Dendritic cell treated with granulocyte-macrophage colony-stimulating factor and Interleukin-4, amounts not matched to agents 40 ng/mL and 50 ng/mL, for 4 days (primary cell): ENCODE measurements at regions of chr17 and their contacts with region 1.

Region 1: DNA sequence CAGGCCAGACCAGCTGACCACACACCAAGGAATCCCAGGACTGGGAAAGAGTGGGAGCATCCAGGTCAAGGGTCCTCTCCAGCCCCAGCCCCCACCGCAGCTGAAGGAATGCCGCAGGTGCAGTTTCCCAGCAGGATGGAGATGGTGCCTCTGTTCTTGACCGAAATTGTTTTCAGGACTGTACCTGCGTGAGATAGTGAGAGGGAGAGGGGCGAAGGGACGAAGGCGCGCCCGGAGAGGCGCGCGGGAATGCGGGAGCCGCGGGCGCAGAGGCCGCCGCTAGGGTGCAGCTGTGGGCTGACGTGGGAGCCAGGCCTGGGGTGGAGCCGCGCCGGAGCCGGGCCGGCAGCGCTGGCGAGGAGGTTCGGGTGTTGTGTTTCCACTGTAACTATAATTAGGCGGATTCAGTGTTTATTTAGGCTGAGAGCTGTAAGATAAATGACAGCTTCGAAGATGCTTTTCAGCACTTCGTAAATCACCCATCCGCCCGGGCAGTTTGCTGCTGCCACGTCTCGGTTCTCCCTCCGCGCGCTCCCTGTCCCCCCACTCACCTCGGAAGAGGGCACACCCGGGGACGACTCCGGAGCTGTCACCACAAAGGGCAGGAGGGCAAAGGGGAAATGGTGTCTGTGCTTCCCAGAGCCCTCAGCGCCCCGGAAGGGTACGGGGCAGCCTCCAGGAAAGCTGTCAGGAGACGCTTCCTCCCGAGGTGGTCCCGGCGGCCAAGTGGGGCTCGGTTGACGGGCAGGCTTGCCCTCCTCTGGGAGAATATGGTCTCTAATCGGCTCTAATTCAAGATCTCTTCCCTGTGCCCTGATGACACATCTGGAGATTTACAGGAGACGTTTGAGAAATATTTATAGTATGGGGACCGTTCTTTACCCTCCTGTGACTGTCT is 38.2 kb downstream of the HOXB1 start:
- H3K4me3 Mint-ChIP-seq: peak overlapping the region; percentile 60
- H3K27ac Mint-ChIP-seq: peak overlapping the region; percentile 68
- H3K4me1 Mint-ChIP-seq: peaks cover 32% of the 10 kb centered on the region
- H3K27me3 Mint-ChIP-seq: peaks cover 78% of the 10 kb centered on the region

Region 2: DNA sequence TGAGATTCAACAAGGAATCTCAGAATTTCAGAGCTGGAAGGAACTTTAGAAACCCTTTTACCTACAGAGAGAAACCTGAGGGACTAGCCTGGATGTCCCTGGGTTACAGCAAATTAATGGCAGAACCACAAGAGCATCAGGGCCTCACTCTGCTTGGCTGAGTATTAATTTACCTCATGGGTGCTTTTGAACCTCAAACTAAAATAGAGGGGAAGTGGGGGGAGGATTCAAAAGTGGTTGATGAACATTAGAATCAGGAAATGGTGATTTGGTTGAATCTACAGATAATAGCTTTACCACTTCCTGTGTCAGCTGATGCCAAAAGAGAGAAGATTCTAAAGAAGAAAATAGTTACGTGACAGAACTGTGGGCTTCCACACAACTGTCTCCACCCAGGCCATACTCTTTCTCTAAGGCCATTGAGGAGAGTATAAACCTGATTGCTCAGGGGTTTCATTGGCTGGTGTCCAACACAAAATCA is 51.4 kb before region 1 on chr17:
- intact Hi-C with region 1: no loop called
- H3K4me3 Mint-ChIP-seq: no peak overlapping the region
- H3K27ac Mint-ChIP-seq: no peak overlapping the region
- H3K4me1 Mint-ChIP-seq: peaks cover 17% of the 10 kb centered on the region
- H3K27me3 Mint-ChIP-seq: peaks cover 50% of the 10 kb centered on the region

Region 3: DNA sequence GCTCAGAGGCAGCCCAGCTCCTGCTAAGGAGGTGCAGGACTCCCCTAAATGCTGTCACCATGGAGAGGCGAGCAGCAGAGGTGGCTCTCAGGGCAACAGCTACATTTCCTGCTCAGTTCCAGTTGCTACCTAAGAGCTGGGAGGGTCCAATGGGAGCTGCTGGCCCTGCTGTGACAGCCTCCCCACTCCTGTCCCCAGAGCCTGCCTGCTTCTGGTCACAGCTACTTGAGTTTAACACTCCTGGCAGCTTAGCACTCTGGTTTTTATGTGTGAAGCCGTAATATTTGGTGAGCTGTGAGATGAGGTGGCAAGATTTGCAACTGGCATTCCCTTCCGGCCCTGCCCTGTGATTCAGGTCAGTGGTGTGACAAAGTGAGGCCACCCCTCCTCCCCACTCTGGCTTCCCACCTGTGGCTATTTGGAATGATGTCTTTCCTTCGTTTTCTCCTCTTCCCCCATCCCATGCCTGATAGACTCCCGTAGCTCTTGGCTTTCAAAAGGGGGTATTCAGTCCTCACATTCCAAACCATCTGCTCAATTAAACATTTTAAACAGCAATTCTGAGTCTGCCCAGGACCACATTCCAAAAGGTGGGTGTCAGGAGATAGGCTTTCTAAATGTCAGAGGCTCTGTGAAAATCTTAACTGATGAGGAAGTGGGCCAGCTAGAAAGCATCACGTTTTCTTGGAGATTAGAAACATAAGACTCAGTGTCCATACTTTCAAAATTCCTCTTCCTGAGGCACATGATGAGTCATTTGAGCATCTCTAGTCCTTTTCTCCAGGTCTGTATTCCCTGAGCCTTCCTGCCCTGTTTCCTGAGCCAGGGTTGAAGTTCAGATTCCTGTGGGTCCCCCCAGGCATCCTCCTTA is 20.0 kb before region 1 on chr17:
- intact Hi-C with region 1: no loop called
- H3K4me3 Mint-ChIP-seq: no peak overlapping the region
- H3K27ac Mint-ChIP-seq: no peak overlapping the region
- H3K4me1 Mint-ChIP-seq: no peaks in the 10 kb centered on the region
- H3K27me3 Mint-ChIP-seq: peaks cover 41% of the 10 kb centered on the region

Region 4: GRCh38 chr17:48543107-48543853 is 50.6 kb after region 1 on chr17:
- intact Hi-C with region 1: loop called (anchors 10 kb)
- H3K4me3 Mint-ChIP-seq: peak overlapping the region; percentile 81
- H3K27ac Mint-ChIP-seq: peak overlapping the region; percentile 86
- H3K4me1 Mint-ChIP-seq: peaks cover 59% of the 10 kb centered on the region
- H3K27me3 Mint-ChIP-seq: peaks cover 83% of the 10 kb centered on the region

Region 5: DNA sequence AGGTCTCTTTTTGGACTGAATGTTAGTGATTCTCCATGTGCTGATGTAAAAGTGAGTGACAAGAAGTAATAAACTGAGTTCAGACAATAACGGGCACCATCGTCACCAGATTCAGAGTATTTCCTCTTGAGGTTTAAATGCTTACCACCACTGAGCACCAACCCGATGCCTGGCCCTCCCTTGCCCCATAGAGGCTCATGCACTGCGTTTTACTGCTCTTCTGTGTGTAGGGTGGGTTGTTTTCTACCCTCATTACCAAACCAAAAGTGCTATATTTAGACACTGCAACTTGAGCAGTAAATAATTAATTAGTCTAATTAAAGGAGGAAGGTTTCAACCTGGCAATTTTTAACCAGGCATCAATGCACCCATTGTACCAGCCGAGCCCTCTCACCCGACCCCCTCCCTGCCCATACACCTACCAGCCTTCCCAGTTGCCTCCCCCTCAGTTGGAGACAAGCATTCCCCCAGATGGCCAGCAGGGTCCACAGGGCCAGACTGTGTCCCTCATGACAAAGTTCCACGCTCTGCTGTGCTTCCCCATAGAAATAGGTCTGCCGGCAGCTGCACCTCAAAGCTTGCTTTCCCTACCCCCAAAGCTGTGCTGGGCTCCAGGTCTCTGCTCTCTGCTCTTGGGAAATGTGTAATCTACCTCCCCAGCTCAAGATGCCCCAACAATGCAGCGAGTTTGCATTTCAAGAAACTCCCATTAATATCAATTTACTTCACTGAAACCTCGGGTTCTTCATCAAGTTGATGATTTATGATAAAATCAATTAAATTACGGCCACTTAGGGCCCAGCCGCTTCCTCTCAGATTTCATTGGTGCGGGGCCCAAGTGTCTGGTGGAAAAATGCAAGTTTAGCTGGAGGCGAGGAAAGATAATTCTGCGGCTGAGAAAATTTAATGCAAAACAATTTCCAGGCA is 69.5 kb after region 1 on chr17:
- intact Hi-C with region 1: no loop called
- H3K4me3 Mint-ChIP-seq: no peak overlapping the region
- H3K27ac Mint-ChIP-seq: no peak overlapping the region
- H3K4me1 Mint-ChIP-seq: peaks cover 5% of the 10 kb centered on the region
- H3K27me3 Mint-ChIP-seq: peaks cover 56% of the 10 kb centered on the region

Region 6: GRCh38 chr17:48610282-48611211 is 117.9 kb after region 1 on chr17 and contains the start of gene HOXB7:
- intact Hi-C with region 1: no loop called
- H3K4me3 Mint-ChIP-seq: peak within 1 kb of the TSS; percentile 79
- H3K27ac Mint-ChIP-seq: peak within 1 kb of the TSS; percentile 25
- H3K4me1 Mint-ChIP-seq: peaks cover 48% of the 10 kb centered on the region
- H3K27me3 Mint-ChIP-seq: peaks cover 96% of the 10 kb centered on the region